ENCODE measurements at regions of chr5 and their contacts with region 1.

Region 1: GRCh38 chr5:1641560-1642166 is 117.9 kb upstream of the LPCAT1 start:
- DNase-seq: peak; percentile 72 to 89 (median 77)
- ATAC-seq: peak; percentile 55 to 73 (median 60)
- H3K4me3 ChIP-seq: no peak overlapping the region
- H3K27ac ChIP-seq: no peak overlapping the region
- H3K4me1 ChIP-seq: peaks cover 0 to 11% (median 5%) of the 10 kb centered on the region in 12 donors
- H3K27me3 ChIP-seq: peaks cover 12 to 35% (median 21%) of the 10 kb centered on the region in 9 donors
- CTCF ChIP-seq: peak; percentile 56 to 95 (median 74)
- POLR2A ChIP-seq: no peak

Region 2: DNA sequence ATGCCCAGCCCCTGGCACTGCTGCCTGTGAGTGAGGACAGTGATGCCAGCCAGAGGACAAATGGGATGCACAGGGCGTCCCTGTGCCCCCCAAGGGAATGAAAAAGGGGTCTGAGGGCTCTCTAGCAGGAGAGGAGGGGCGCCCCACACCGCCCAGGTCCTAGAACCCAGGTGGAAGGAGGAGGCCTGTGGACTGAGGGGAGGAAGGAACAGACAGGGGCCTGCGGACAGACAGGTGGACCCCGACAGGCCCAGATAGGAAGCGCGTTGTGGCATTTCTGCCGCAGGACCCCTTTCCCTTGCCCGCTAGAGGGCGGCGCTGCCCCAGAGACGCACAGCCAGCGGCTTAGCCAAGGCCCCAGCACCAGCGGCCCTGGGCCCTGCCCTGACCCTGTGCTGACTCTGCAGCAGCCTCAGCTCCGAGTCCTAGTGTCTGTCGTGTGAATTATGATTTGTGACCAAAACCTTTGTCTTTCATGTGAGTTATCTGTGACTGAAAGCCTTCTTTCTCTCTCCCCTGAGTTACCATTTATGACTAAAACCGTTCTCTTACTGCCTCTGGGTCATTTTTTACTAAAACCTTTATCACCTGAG is 718.3 kb before region 1 on chr5:
- intact Hi-C with region 1: loop called in 3 of 10 experiments (anchors 5 to 10 kb)
- DNase-seq: peak; percentile 78 to 89 (median 84)
- ATAC-seq: peak; percentile 78 to 93 (median 92)
- H3K4me3 ChIP-seq: no peak overlapping the region
- H3K27ac ChIP-seq: no peak overlapping the region
- H3K4me1 ChIP-seq: peaks cover 0 to 16% (median 8%) of the 10 kb centered on the region in 12 donors
- H3K27me3 ChIP-seq: peaks cover 0 to 29% (median 6%) of the 10 kb centered on the region in 9 donors
- CTCF ChIP-seq: peak; percentile 70 to 91 (median 86)
- POLR2A ChIP-seq: no peak

Region 3: DNA sequence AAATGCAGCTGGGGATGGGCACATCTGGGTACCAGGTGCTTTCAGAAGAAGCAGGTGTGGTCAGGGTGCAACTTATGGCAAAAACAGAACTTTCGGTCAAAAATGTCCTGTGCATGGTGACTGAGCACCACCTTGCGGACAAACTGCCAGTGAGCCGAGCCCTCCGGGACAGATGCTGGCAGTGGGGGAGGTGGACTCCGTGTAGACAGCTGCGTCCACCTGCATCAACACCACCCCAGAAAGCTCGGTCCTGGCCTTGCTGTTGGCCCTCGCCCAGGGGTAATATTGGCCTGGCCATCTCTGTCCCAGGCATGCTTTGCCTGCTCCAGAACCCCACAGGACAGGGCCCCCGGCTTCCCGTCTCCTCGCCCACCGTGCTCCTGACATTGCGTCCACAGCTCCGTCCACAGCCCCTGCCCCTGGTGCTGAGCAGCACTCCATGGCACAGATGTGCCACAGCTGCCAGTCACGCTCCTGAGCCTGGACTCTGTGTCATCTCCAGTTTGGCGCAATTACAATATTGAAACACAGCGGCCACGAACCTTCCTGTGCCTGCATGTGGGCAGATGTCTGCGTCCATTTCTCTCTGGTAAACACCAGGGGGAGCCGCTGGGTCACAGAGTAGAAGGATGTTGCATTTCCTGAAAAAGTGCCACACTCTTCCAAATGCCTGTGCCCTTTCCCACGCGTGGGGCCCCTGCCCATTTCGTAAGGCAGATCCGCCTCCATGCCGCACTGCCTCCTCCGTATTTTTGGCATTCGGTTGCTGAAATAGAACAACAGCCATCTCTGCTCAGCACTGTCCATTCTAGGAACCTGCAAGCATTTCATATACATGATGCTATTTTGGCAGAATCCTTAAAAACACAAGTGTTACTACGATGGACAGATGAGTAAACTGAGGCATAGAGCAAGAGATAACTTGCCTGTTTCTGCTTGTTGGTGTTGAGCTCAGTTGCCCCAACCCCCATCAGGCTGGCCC is 473.6 kb before region 1 on chr5:
- intact Hi-C with region 1: loop called in 8 of 10 experiments (anchors 1 to 10 kb)
- DNase-seq: peak; percentile 64 to 80 (median 69)
- ATAC-seq: peak; percentile 62 to 84 (median 71)
- H3K4me3 ChIP-seq: peak overlapping the region in 6 of 12 donors; percentile 5 to 32 (median 13)
- H3K27ac ChIP-seq: no peak overlapping the region
- H3K4me1 ChIP-seq: peaks cover 0 to 12% (median 7%) of the 10 kb centered on the region in 12 donors
- H3K27me3 ChIP-seq: peaks cover 0 to 8% (median 0%) of the 10 kb centered on the region in 9 donors
- CTCF ChIP-seq: peak; percentile 40 to 73 (median 62)
- POLR2A ChIP-seq: no peak

Region 4: GRCh38 chr5:1182633-1183423 is 458.8 kb before region 1 on chr5:
- intact Hi-C with region 1: loop called in 1 of 10 experiments (anchors 10 kb)
- DNase-seq: peak in 2 of 5 donors; percentile 25 to 53
- ATAC-seq: peak; percentile 47 to 71 (median 53)
- H3K4me3 ChIP-seq: no peak overlapping the region
- H3K27ac ChIP-seq: peak overlapping the region in 3 of 12 donors; percentile 27 to 64 (median 31)
- H3K4me1 ChIP-seq: peaks cover 0 to 24% (median 0%) of the 10 kb centered on the region in 12 donors
- H3K27me3 ChIP-seq: peaks cover 0 to 32% (median 0%) of the 10 kb centered on the region in 9 donors
- CTCF ChIP-seq: no peak
- POLR2A ChIP-seq: no peak

Region 5: GRCh38 chr5:1366514-1366913 is 275.1 kb before region 1 on chr5:
- intact Hi-C with region 1: no loop called
- DNase-seq: no peak
- ATAC-seq: no peak
- H3K4me3 ChIP-seq: no peak overlapping the region
- H3K27ac ChIP-seq: no peak overlapping the region
- H3K4me1 ChIP-seq: no peaks in the 10 kb centered on the region
- H3K27me3 ChIP-seq: peaks cover 0 to 45% (median 16%) of the 10 kb centered on the region in 9 donors
- CTCF ChIP-seq: no peak
- POLR2A ChIP-seq: no peak

Region 6: GRCh38 chr5:1380011-1380817 is 261.4 kb before region 1 on chr5:
- intact Hi-C with region 1: loop called in 8 of 10 experiments (anchors 2 to 10 kb)
- DNase-seq: peak in 2 of 5 donors; percentile 34 to 60
- ATAC-seq: peak in 3 of 4 donors; percentile 65 to 85 (median 76)
- H3K4me3 ChIP-seq: peak overlapping the region in 2 of 12 donors; percentile 6 to 21
- H3K27ac ChIP-seq: no peak overlapping the region
- H3K4me1 ChIP-seq: peaks cover 0 to 8% (median 0%) of the 10 kb centered on the region in 12 donors
- H3K27me3 ChIP-seq: peaks cover 0 to 32% (median 9%) of the 10 kb centered on the region in 9 donors
- CTCF ChIP-seq: peak; percentile 48 to 69 (median 57)
- POLR2A ChIP-seq: no peak

Region 7: GRCh38 chr5:1479581-1480188 is 162.0 kb before region 1 on chr5:
- intact Hi-C with region 1: loop called in 5 of 10 experiments (anchors 5 to 10 kb)
- DNase-seq: peak in 2 of 5 donors; percentile 30 to 65
- ATAC-seq: peak in 3 of 4 donors; percentile 8 to 43 (median 24)
- H3K4me3 ChIP-seq: peak overlapping the region in 1 of 12 donors; percentile 3
- H3K27ac ChIP-seq: peak overlapping the region in 2 of 12 donors; percentile 22 to 84
- H3K4me1 ChIP-seq: peaks cover 0 to 46% (median 0%) of the 10 kb centered on the region in 12 donors
- H3K27me3 ChIP-seq: no peaks in the 10 kb centered on the region
- CTCF ChIP-seq: peak; percentile 22 to 74 (median 57)
- POLR2A ChIP-seq: no peak

Region 8: DNA sequence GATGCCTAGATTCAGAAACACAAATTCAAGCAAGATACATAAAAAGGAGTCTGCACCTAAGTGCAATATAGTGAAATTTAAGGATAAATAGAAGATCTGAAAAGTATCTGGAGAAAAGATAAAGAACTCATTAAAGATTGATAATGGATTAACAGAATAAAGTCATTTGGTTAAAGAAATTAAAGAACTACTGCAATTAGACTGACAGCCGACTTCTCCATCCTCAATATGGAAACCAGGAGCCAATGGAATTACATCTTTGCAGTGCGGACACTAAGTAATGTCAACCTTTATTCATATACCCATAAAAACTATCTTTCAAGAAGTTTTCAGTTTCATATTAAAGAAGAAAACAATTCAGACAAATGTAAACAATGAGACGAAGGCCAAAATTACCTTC is 77.0 kb after region 1 on chr5:
- intact Hi-C with region 1: no loop called
- DNase-seq: no peak
- ATAC-seq: no peak
- H3K4me3 ChIP-seq: no peak overlapping the region
- H3K27ac ChIP-seq: no peak overlapping the region
- H3K4me1 ChIP-seq: no peaks in the 10 kb centered on the region
- H3K27me3 ChIP-seq: peaks cover 0 to 3% (median 0%) of the 10 kb centered on the region in 9 donors
- CTCF ChIP-seq: no peak
- POLR2A ChIP-seq: no peak